ENCODE measurements at regions of chr20 and their contacts with region 1.

Region 1: GRCh38 chr20:49323622-49324238 is 45.9 kb upstream of the ZNFX1 start:
- DNase-seq: no peak
- H3K4me3 ChIP-seq: no peak overlapping the region
- H3K27ac ChIP-seq: peak overlapping the region in 3 of 4 donors; percentile 47 to 55 (median 54)
- H3K4me1 ChIP-seq: peaks cover 6 to 46% (median 42%) of the 10 kb centered on the region in 4 donors
- H3K27me3 ChIP-seq: peaks cover 0 to 24% (median 13%) of the 10 kb centered on the region in 4 donors
- CTCF ChIP-seq: peak; percentile 11 to 43 (median 32)
- EP300 ChIP-seq: no peak
- POLR2A ChIP-seq: no peak

Region 2: GRCh38 chr20:49245921-49246740 is 77.6 kb before region 1 on chr20:
- intact Hi-C with region 1: loop called (anchors 2 kb)
- DNase-seq: no peak
- H3K4me3 ChIP-seq: no peak overlapping the region
- H3K27ac ChIP-seq: peak overlapping the region; percentile 1 to 63 (median 42)
- H3K4me1 ChIP-seq: peaks cover 15 to 26% (median 17%) of the 10 kb centered on the region in 4 donors
- H3K27me3 ChIP-seq: no peaks in the 10 kb centered on the region
- CTCF ChIP-seq: peak; percentile 51 to 70 (median 67)
- EP300 ChIP-seq: no peak
- POLR2A ChIP-seq: no peak

Measured in esophagus muscularis mucosa (tissue), 4 donors.